ENCODE measurements at regions of chr11 and their contacts with region 1.

Region 1: DNA sequence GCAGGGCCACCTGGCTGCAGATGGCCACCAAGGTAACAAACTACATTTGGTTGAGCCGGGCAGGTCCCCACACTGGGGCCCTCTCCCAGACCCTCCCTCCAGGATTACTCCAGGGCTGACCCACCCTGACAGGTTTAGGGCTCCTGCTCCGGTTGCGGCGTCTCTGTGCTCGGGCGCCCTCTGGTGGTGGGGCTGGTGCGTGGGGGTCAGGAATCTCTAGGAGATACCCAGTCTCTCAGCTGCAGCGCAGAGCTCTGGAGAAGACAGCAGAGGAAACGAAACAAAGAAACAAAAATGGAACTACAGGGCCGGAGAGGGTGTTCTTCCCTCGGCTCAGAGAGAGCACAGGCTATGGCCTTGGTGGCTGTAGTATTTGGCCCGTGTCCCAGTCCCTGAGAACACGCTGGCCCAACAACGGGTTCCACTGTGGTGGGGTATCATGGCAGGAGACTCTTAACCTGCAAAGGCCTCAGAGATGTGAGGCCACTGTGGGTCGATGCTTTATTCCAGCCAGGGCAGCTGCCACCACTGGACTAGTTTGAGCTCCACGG is 2.4 kb downstream of the C11orf96 start:
- DNase-seq: peak in 4 of 5 donors; percentile 28 to 47 (median 40)
- H3K4me3 ChIP-seq: no peak overlapping the region
- H3K4me3 Mint-ChIP-seq: peak overlapping the region in 7 of 8 donors; percentile 40 to 96 (median 74)
- H3K27ac ChIP-seq: no peak overlapping the region
- H3K27ac Mint-ChIP-seq: peak overlapping the region in 1 of 7 donors; percentile 48
- H3K4me1 ChIP-seq: peaks cover 13% of the 10 kb centered on the region
- H3K4me1 Mint-ChIP-seq: peaks cover 7 to 21% (median 16%) of the 10 kb centered on the region in 4 donors
- H3K27me3 ChIP-seq: peaks cover 24% of the 10 kb centered on the region
- H3K27me3 Mint-ChIP-seq: peaks cover 36 to 42% of the 10 kb centered on the region in 2 donors

Region 2: DNA sequence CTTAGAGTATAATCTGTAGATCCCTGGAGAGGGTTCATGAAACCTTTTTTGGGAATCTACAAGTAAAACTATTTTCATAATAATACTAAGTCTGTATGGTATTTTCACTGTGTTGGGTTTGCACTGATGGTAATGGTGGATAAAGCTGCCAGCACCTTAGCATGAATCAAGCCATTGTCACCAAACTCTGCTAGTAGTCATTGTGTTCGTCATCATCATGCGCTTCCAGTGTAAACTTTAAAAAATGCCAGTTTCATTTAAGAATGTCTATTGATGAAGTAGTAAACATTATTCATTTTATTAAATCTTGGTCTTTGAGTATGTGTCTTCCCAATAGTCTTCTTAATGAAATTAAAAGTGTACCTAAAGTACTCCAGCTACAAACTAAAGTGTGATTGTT is 49.2 kb before region 1 on chr11:
- CTCF ChIA-PET with region 1: interaction called, 8 read pairs
- POLR2A ChIA-PET with region 1: no interaction called
- intact Hi-C with region 1: loop called (anchors 2 kb)
- DNase-seq: no peak
- H3K4me3 ChIP-seq: no peak overlapping the region
- H3K4me3 Mint-ChIP-seq: no peak overlapping the region
- H3K27ac ChIP-seq: no peak overlapping the region
- H3K27ac Mint-ChIP-seq: peak overlapping the region in 1 of 7 donors; percentile 77
- H3K4me1 ChIP-seq: no peaks in the 10 kb centered on the region
- H3K4me1 Mint-ChIP-seq: peaks cover 0 to 7% (median 4%) of the 10 kb centered on the region in 4 donors
- H3K27me3 ChIP-seq: no peaks in the 10 kb centered on the region
- H3K27me3 Mint-ChIP-seq: no peaks in the 10 kb centered on the region

Measured in CD4-positive, alpha-beta memory T cell (primary cell).